ENCODE measurements at regions of chr5 and their contacts with region 1.

Region 1: GRCh38 chr5:169637085-169637548 is at the start of gene DOCK2:
- DNase-seq: peak; percentile 76
- ATAC-seq: peak; percentile 92
- H3K4me3 Mint-ChIP-seq: peak within 1 kb of the TSS; percentile 90
- H3K27ac Mint-ChIP-seq: peak within 1 kb of the TSS; percentile 91
- H3K4me1 Mint-ChIP-seq: peaks cover 54% of the 10 kb centered on the region
- H3K27me3 Mint-ChIP-seq: no peaks in the 10 kb centered on the region
- CTCF ChIP-seq: no peak
- total RNA-seq, gene DOCK2: 274 and 344 TPM in 2 replicates

Region 2: DNA sequence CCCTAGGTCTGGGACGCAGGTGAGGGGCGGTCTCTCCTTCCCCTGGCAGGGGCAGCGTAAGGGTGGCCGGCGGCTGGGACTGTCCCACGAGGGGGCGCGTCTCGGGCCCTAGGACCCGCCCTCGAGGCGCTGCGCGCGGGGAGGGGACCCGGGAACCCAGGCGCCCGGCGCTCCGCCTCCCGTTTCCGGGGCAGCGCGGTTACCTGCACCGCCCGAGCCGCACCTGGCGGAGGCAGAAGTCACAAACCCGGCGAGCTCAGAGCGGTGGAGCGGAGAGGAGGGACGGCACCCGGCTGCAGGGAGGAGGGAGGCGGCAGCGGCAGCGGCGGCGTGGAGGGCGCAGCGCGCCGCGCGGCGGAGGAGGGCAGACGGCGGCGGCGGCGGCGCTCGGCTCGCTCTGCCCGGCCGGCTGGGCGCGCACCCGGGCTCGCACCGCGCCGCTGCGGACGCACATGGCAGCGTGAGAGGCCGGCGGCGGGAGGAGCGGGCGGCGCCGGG is 1345.6 kb before region 1 on chr5 and contains the start of gene WWC1:
- CTCF ChIA-PET with region 1: no interaction called
- POLR2A ChIA-PET with region 1: no interaction called
- intact Hi-C with region 1: loop called (anchors 5 kb)
- DNase-seq: peak; percentile 62
- ATAC-seq: peak; percentile 90
- H3K4me3 Mint-ChIP-seq: peak within 1 kb of the TSS; percentile 73
- H3K27ac Mint-ChIP-seq: no peak within 1 kb of the TSS
- H3K4me1 Mint-ChIP-seq: peaks cover 25% of the 10 kb centered on the region
- H3K27me3 Mint-ChIP-seq: peaks cover 16% of the 10 kb centered on the region
- CTCF ChIP-seq: no peak
- total RNA-seq, gene WWC1: 1.3 and 2.0 TPM in 2 replicates

Region 3: GRCh38 chr5:169650701-169651331 is 13.7 kb after region 1 on chr5:
- CTCF ChIA-PET with region 1: interaction called, 3 read pairs
- POLR2A ChIA-PET with region 1: interaction called, 14 read pairs
- intact Hi-C with region 1: loop called (anchors 1 kb)
- DNase-seq: no peak
- ATAC-seq: peak; percentile 67
- H3K4me3 Mint-ChIP-seq: peak overlapping the region; percentile 68
- H3K27ac Mint-ChIP-seq: peak overlapping the region; percentile 95
- H3K4me1 Mint-ChIP-seq: peaks cover 98% of the 10 kb centered on the region
- H3K27me3 Mint-ChIP-seq: no peaks in the 10 kb centered on the region
- CTCF ChIP-seq: no peak

Region 4: GRCh38 chr5:169670769-169671525 is 33.8 kb after region 1 on chr5:
- CTCF ChIA-PET with region 1: no interaction called
- POLR2A ChIA-PET with region 1: interaction called, 5 read pairs
- intact Hi-C with region 1: loop called (anchors 1 kb)
- DNase-seq: no peak
- ATAC-seq: peak; percentile 87
- H3K4me3 Mint-ChIP-seq: no peak overlapping the region
- H3K27ac Mint-ChIP-seq: peak overlapping the region; percentile 47
- H3K4me1 Mint-ChIP-seq: peaks cover 35% of the 10 kb centered on the region
- H3K27me3 Mint-ChIP-seq: no peaks in the 10 kb centered on the region
- CTCF ChIP-seq: no peak

Region 5: DNA sequence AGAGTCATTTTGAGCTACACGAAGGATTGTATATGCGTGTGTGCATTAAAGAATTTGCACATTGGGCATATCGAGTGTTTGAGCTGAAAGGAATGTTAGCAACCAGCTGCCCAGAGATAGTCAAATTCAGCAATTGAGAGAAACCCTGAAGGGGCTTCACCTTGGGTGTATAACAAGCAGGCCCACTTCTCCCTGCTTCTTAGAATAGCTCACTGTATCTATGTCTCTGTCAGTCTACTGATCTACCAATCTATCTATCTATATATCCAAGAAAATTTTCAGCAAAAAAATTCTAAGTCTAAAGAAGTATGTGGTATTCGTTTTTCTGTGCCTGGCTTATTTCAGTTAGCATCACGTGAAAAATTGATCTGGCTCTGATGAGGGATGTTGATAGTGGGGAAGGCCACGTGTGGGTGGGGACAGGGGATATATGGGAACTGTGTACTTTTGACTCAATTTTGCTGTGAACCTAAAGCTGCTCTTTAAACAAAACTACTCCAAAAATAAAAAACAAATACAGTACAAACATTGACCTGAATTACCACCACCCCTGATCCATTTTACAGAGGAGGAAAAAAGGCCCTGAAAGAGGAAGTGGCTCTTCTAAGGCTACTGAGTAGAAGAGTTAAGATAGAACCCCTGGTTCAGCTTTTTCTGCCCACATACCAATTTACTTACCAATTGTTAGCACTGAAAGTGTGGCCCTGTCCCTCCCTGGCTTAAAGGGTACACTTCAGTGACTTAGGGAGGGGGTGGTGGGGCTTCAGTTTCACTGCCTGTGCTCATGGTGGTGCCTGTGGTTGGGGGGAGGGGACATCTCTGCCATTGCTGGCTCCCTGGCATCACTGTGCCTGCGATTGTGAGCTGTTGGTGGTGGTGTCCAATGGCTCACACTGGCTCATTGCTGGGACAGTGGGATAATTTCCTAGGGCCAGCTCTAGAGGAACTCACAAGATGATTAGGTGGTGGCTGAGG is 141.8 kb after region 1 on chr5:
- CTCF ChIA-PET with region 1: no interaction called
- POLR2A ChIA-PET with region 1: no interaction called
- intact Hi-C with region 1: loop called (anchors 1 kb)
- DNase-seq: no peak
- ATAC-seq: peak; percentile 82
- H3K4me3 Mint-ChIP-seq: peak overlapping the region; percentile 28
- H3K27ac Mint-ChIP-seq: peak overlapping the region; percentile 74
- H3K4me1 Mint-ChIP-seq: peaks cover 31% of the 10 kb centered on the region
- H3K27me3 Mint-ChIP-seq: no peaks in the 10 kb centered on the region
- CTCF ChIP-seq: no peak

Measured in activated B cell treated with CpG ODN at 0.5 μM for 24 hours (primary cell).